Endothelial cell of umbilical vein (primary cell): ENCODE measurements at regions of chr17 and their contacts with region 1.

Region 1: DNA sequence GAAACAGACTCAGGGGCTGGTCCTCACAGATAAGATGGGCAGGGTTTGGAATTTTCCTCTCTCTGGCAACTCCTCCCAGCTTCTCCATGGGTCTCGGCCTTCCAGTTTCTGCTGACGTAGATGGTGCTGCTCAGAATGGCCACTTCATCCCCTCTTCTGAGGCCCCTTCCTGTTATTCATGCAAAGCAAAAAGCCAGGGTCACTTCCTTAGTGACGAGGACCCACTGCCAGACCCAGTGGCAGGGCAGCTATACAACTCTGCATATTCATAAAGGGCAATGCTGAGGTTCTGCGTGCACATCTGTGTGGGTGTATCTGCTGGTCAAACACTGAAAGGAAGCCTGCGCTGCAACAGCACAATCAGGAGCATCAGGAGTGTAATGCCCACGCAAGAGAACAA is 108.8 kb downstream of the WSCD1 start:
- DNase-seq: peak; percentile 98
- H3K4me3 ChIP-seq: no peak overlapping the region
- H3K27ac ChIP-seq: peak overlapping the region; percentile 75
- H3K4me1 ChIP-seq: peaks cover 19% of the 10 kb centered on the region
- H3K27me3 ChIP-seq: no peaks in the 10 kb centered on the region
- CTCF ChIP-seq: no peak
- POLR2A ChIP-seq: no peak

Region 2: DNA sequence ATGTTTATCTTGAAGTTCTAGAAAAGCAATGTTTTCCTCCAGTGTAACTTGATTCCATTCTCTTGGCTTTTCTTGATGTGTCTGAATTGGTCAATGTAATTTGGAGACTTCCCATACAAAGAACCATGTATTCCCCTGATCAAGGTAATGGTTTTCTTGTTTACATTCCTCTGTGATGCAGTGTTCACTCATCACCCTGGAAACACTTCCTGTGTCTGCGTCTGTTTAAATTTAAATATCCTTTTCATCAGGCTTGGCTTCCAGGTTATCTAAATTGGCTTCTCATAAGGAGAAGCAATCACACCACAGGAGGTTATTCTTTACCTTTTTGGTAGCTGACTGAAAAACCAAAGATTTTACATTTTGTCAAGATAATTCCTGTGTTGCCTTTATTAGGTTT is 346.1 kb before region 1 on chr17:
- CTCF ChIA-PET with region 1: no interaction called
- POLR2A ChIA-PET with region 1: no interaction called
- dilution Hi-C with region 1: no loop called
- intact Hi-C with region 1: loop called (anchors 5 kb)
- DNase-seq: peak; percentile 87
- H3K4me3 ChIP-seq: no peak overlapping the region
- H3K27ac ChIP-seq: peak overlapping the region; percentile 95
- H3K4me1 ChIP-seq: peaks cover 49% of the 10 kb centered on the region
- H3K27me3 ChIP-seq: no peaks in the 10 kb centered on the region
- CTCF ChIP-seq: no peak
- POLR2A ChIP-seq: no peak

Region 3: GRCh38 chr17:6191405-6192324 is 12.6 kb after region 1 on chr17:
- CTCF ChIA-PET with region 1: interaction called, 10 read pairs
- POLR2A ChIA-PET with region 1: interaction called, 13 read pairs
- dilution Hi-C with region 1: no loop called
- intact Hi-C with region 1: loop called (anchors 1 kb)
- DNase-seq: peak; percentile 94
- H3K4me3 ChIP-seq: no peak overlapping the region
- H3K27ac ChIP-seq: peak overlapping the region; percentile 92
- H3K4me1 ChIP-seq: peaks cover 24% of the 10 kb centered on the region
- H3K27me3 ChIP-seq: no peaks in the 10 kb centered on the region
- CTCF ChIP-seq: no peak
- POLR2A ChIP-seq: peak; percentile 37

Region 4: GRCh38 chr17:6231886-6232731 is 53.1 kb after region 1 on chr17:
- CTCF ChIA-PET with region 1: no interaction called
- POLR2A ChIA-PET with region 1: no interaction called
- dilution Hi-C with region 1: no loop called
- intact Hi-C with region 1: loop called (anchors 5 kb)
- DNase-seq: peak; percentile 53
- H3K4me3 ChIP-seq: no peak overlapping the region
- H3K27ac ChIP-seq: peak overlapping the region; percentile 72
- H3K4me1 ChIP-seq: peaks cover 15% of the 10 kb centered on the region
- H3K27me3 ChIP-seq: no peaks in the 10 kb centered on the region
- CTCF ChIP-seq: no peak
- POLR2A ChIP-seq: no peak

Region 5: DNA sequence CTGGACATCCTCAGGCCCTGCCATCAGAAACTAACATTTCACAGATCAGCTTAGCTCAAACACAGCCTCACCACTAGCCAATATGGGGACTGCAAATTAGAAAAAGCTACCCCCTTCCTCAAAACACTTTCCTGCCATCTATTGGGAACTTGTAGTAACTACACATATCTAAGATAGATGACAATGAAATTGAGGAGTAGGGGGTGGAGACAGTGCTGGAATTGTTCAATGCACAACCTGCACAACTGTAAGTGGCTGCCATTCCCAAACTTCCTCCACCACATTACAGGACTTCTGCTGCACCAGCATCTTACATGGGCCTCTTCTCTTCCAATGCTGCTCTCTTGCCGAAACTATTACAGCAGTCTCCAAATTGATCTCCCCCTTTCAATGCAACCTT is 234.0 kb after region 1 on chr17:
- CTCF ChIA-PET with region 1: interaction called, 16 read pairs
- POLR2A ChIA-PET with region 1: no interaction called
- dilution Hi-C with region 1: no loop called
- intact Hi-C with region 1: loop called (anchors 1 kb)
- DNase-seq: peak; percentile 67
- H3K4me3 ChIP-seq: no peak overlapping the region
- H3K27ac ChIP-seq: no peak overlapping the region
- H3K4me1 ChIP-seq: no peaks in the 10 kb centered on the region
- H3K27me3 ChIP-seq: no peaks in the 10 kb centered on the region
- CTCF ChIP-seq: peak; percentile 50 to 56
- POLR2A ChIP-seq: no peak